ENCODE measurements at regions of chr1 and their contacts with region 1.

Region 1: GRCh38 chr1:108559215-108560186 is at the start of gene EEIG2:
- DNase-seq: peak; percentile 88
- H3K4me3 ChIP-seq: peak within 1 kb of the TSS; percentile 45 to 76 (median 53)
- H3K27ac ChIP-seq: peak within 1 kb of the TSS; percentile 33
- H3K4me1 ChIP-seq: peaks cover 25% of the 10 kb centered on the region
- H3K27me3 ChIP-seq: peaks cover 3 to 11% of the 10 kb centered on the region in 2 experiments
- CTCF ChIP-seq: peak; percentile 64 to 78
- POLR2A ChIP-seq: peak; percentile 41
- total RNA-seq, gene EEIG2: 7.2 and 8.7 TPM in 2 replicates

Region 2: GRCh38 chr1:108512239-108512981 is 47.1 kb before region 1 on chr1:
- CTCF ChIA-PET with region 1: interaction called, 35 read pairs
- POLR2A ChIA-PET with region 1: no interaction called
- dilution Hi-C with region 1: no loop called
- intact Hi-C with region 1: loop called (anchors 1 kb)
- DNase-seq: peak; percentile 39
- H3K4me3 ChIP-seq: no peak overlapping the region
- H3K27ac ChIP-seq: no peak overlapping the region
- H3K4me1 ChIP-seq: no peaks in the 10 kb centered on the region
- H3K27me3 ChIP-seq: peaks cover 2 to 9% of the 10 kb centered on the region in 2 experiments
- CTCF ChIP-seq: peak; percentile 43 to 53
- POLR2A ChIP-seq: no peak

Region 3: DNA sequence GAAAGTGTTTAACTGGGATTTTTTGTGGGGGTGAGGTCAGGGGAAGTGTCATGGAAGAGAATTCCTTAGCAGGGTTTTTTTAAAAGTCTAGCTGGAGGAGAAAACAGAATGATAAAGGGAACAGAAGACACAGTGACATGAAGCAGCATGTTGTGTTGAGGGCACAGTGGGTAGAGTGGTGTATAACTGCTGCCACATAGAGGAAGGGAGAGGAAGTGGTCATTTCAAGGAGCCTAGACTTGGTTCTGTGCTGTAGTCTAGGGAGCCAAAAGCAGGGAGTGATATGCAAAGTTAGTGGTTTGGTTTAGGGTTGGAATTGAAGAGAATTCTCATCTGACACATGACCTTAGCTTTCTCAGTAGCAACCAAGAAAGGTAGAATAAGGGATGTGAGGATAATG is 10.6 kb after region 1 on chr1:
- CTCF ChIA-PET with region 1: interaction called, 15 read pairs
- POLR2A ChIA-PET with region 1: no interaction called
- dilution Hi-C with region 1: no loop called
- intact Hi-C with region 1: loop called (anchors 1 kb)
- DNase-seq: no peak
- H3K4me3 ChIP-seq: no peak overlapping the region
- H3K27ac ChIP-seq: no peak overlapping the region
- H3K4me1 ChIP-seq: peaks cover 3% of the 10 kb centered on the region
- H3K27me3 ChIP-seq: no peaks in the 10 kb centered on the region
- CTCF ChIP-seq: peak in 1 of 2 donors; percentile 40
- POLR2A ChIP-seq: no peak

Region 4: GRCh38 chr1:108575375-108575774 is 15.9 kb after region 1 on chr1:
- CTCF ChIA-PET with region 1: interaction called, 15 read pairs
- POLR2A ChIA-PET with region 1: no interaction called
- dilution Hi-C with region 1: no loop called
- intact Hi-C with region 1: loop called (anchors 1 kb)
- DNase-seq: peak; percentile 55
- H3K4me3 ChIP-seq: no peak overlapping the region
- H3K27ac ChIP-seq: no peak overlapping the region
- H3K4me1 ChIP-seq: peaks cover 7% of the 10 kb centered on the region
- H3K27me3 ChIP-seq: no peaks in the 10 kb centered on the region
- CTCF ChIP-seq: no peak
- POLR2A ChIP-seq: no peak

Region 5: GRCh38 chr1:108584348-108584856 is 24.9 kb after region 1 on chr1:
- CTCF ChIA-PET with region 1: interaction called, 28 read pairs
- POLR2A ChIA-PET with region 1: no interaction called
- dilution Hi-C with region 1: no loop called
- intact Hi-C with region 1: loop called (anchors 1 kb)
- DNase-seq: peak; percentile 57
- H3K4me3 ChIP-seq: peak overlapping the region in 1 of 3 experiments; percentile 21
- H3K27ac ChIP-seq: peak overlapping the region; percentile 46
- H3K4me1 ChIP-seq: peaks cover 32% of the 10 kb centered on the region
- H3K27me3 ChIP-seq: no peaks in the 10 kb centered on the region
- CTCF ChIP-seq: no peak
- POLR2A ChIP-seq: no peak

Region 6: DNA sequence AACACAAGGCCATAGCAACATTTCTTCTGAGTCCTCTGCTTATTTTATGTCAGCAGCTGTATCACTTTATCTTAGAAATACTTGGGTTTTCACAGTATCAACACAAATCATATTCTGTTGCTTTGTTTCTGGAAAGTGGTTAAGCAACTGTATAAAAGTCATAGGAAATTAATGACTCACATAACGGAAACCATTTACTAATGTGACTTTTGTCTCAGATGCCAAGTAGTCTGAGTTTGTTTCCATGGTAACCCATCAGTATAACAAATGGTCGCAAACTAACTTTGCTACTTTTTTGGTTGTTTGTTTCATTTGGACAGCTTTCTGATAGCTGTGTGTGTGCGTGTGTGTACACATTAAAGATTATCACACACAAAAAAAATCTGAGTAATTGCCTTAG is 31.5 kb after region 1 on chr1:
- CTCF ChIA-PET with region 1: interaction called, 28 read pairs
- POLR2A ChIA-PET with region 1: no interaction called
- dilution Hi-C with region 1: no loop called
- intact Hi-C with region 1: loop called (anchors 1 kb)
- DNase-seq: peak; percentile 97
- H3K4me3 ChIP-seq: peak overlapping the region in 1 of 3 experiments; percentile 31
- H3K27ac ChIP-seq: peak overlapping the region; percentile 94
- H3K4me1 ChIP-seq: peaks cover 39% of the 10 kb centered on the region
- H3K27me3 ChIP-seq: no peaks in the 10 kb centered on the region
- CTCF ChIP-seq: no peak
- POLR2A ChIP-seq: no peak

Region 7: GRCh38 chr1:108615544-108615943 is 56.0 kb after region 1 on chr1:
- CTCF ChIA-PET with region 1: interaction called, 13 read pairs
- POLR2A ChIA-PET with region 1: no interaction called
- dilution Hi-C with region 1: no loop called
- intact Hi-C with region 1: no loop called
- DNase-seq: no peak
- H3K4me3 ChIP-seq: no peak overlapping the region
- H3K27ac ChIP-seq: no peak overlapping the region
- H3K4me1 ChIP-seq: no peaks in the 10 kb centered on the region
- H3K27me3 ChIP-seq: no peaks in the 10 kb centered on the region
- CTCF ChIP-seq: no peak
- POLR2A ChIP-seq: no peak

Measured in endothelial cell of umbilical vein (primary cell).